ENCODE measurements at regions of chr3 and their contacts with region 1.

Region 1: DNA sequence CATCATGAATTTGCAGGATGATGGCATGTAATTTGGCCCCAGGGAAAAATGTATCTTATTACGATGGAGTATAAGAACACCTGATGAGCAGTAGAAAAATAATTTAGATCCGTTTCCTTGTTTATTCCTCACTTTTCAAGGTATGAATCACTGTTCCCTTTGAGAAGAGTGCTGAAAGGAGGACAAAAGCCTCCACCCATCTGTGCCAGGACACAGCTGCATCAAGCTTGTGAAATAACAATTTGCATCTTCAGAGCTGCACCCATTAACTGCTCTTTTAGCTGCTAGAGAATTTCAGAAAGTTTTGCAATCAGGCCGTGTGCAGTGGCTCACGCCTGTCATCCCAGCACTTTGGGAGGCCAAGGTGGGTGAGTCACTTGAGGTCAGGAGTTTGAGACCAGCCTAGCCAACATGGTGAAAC is 9.6 kb downstream of the CLDND1 start:
- DNase-seq: peak; percentile 19 to 74
- ATAC-seq: peak; percentile 93 to 97
- H3K4me3 ChIP-seq: no peak overlapping the region
- H3K27ac ChIP-seq: peak overlapping the region in 3 of 4 donors; percentile 3 to 43 (median 34)
- H3K4me1 ChIP-seq: peaks cover 5 to 18% of the 10 kb centered on the region in 2 donors
- H3K27me3 ChIP-seq: no peaks in the 10 kb centered on the region
- CTCF ChIP-seq: no peak
- POLR2A ChIP-seq: no peak

Region 2: DNA sequence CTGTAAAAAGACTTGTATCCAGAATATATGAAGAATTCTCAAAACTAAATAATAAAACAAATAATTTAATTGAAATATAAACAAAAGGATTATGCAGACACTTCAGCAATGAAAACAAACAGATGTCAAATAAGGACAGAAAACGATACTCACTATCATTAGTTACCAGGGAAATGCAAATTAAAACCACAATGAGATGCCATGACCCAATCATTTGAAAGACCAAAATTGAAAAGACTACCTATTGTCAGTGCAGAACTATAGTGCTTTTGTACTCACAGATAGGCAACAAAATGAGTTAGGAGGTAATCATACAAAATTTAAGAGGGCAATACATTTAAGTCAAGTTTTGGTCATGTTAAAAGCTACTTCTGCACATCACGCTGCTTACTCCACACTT is 191.0 kb before region 1 on chr3:
- in situ Hi-C with region 1: no loop called
- intact Hi-C with region 1: no loop called
- DNase-seq: no peak
- ATAC-seq: no peak
- H3K4me3 ChIP-seq: no peak overlapping the region
- H3K27ac ChIP-seq: no peak overlapping the region
- H3K4me1 ChIP-seq: no peaks in the 10 kb centered on the region
- H3K27me3 ChIP-seq: no peaks in the 10 kb centered on the region
- CTCF ChIP-seq: no peak
- POLR2A ChIP-seq: no peak

Region 3: DNA sequence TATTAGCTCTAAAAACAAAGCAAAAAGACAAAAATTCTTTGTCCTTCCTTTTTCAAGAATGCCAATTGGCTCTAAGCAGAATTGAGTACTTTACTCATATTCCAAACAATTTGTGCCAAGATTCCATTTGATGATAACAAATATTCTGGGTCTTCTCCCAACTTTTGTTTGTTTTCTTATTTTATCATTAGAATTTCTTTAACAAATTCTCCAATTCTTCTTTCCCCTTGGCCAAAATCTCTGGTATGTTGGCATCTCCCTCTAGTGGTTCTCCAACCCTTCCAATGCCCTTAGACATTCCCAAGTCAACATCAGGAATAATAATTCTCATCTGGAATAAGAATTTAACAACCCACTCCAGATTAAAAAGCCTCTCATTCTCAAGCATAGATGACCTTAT is 75.0 kb after region 1 on chr3:
- in situ Hi-C with region 1: loop called in 1 of 4 experiments (anchors 10 kb)
- intact Hi-C with region 1: no loop called
- DNase-seq: no peak
- ATAC-seq: no peak
- H3K4me3 ChIP-seq: no peak overlapping the region
- H3K27ac ChIP-seq: no peak overlapping the region
- H3K4me1 ChIP-seq: peaks cover 9 to 12% of the 10 kb centered on the region in 2 donors
- H3K27me3 ChIP-seq: no peaks in the 10 kb centered on the region
- CTCF ChIP-seq: no peak
- POLR2A ChIP-seq: no peak